Sigmoid colon (tissue), 7 donors: ENCODE measurements at regions of chr1 and their contacts with region 1.

Region 1: DNA sequence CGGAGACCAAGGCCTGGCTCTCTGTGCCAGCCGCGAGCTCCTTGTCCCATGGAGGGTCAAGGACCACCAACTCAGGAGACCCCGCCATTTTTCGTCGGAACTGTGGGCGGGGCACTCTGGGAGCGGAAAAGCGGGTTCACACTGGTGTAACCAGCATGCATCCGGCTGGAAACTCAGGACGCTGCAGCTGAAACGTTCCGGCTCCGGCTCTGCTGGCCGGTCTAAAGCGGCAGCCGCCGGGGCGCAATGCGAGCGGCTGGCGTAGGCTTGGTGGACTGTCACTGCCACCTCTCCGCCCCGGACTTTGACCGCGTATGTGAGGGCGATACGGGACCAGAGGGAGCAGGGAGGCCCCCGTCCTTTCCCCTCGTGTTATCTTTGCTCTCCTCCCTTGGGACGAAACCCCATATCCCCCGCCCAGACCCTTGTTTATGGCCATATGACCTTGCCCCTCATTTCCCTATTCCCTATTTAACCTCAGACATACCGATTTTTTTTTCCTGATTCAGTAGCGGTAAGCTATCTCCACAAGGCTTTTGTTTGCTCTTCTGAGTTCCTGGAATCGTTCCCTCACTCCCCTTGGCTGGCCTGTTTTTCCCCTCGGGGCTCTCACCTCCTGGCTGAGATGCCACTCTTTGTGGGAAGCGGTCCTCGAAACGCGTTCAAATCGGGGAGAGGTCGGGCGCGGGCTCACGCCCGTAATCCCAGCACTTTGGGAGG is at the starts of genes NSL1 and TATDN3:
- DNase-seq: peak; percentile 94
- H3K4me3 ChIP-seq: peak within 1 kb of the TSS; percentile 69 to 92 (median 78)
- H3K27ac ChIP-seq: peak within 1 kb of the TSS; percentile 89 to 98 (median 95)
- H3K4me1 ChIP-seq: peaks cover 0 to 41% (median 29%) of the 10 kb centered on the region in 4 donors
- H3K27me3 ChIP-seq: no peaks in the 10 kb centered on the region
- CTCF ChIP-seq: no peak
- EP300 ChIP-seq: peak in 1 of 4 donors; percentile 47
- POLR2A ChIP-seq: peak; percentile 56 to 73
- total RNA-seq, gene NSL1: 26.0 to 50.4 (median 30.2) TPM
- total RNA-seq, gene TATDN3: 9.1 to 25.7 (median 17.8) TPM

Region 2: GRCh38 chr1:212477014-212477679 is 314.7 kb before region 1 on chr1:
- intact Hi-C with region 1: loop called (anchors 5 kb)
- DNase-seq: peak; percentile 93
- H3K4me3 ChIP-seq: no peak overlapping the region
- H3K27ac ChIP-seq: no peak overlapping the region
- H3K4me1 ChIP-seq: peaks cover 0 to 6% (median 2%) of the 10 kb centered on the region in 4 donors
- H3K27me3 ChIP-seq: no peaks in the 10 kb centered on the region
- CTCF ChIP-seq: peak; percentile 62 to 88 (median 79)
- EP300 ChIP-seq: no peak
- POLR2A ChIP-seq: no peak

Region 3: GRCh38 chr1:212566522-212567479 is 225.0 kb before region 1 on chr1:
- intact Hi-C with region 1: loop called (anchors 10 kb)
- DNase-seq: peak; percentile 66
- H3K4me3 ChIP-seq: peak overlapping the region; percentile 28 to 56 (median 52)
- H3K27ac ChIP-seq: peak overlapping the region; percentile 73 to 81 (median 78)
- H3K4me1 ChIP-seq: peaks cover 0 to 15% (median 11%) of the 10 kb centered on the region in 4 donors
- H3K27me3 ChIP-seq: no peaks in the 10 kb centered on the region
- CTCF ChIP-seq: no peak
- EP300 ChIP-seq: no peak
- POLR2A ChIP-seq: peak in 1 of 2 donors; percentile 13

Region 4: GRCh38 chr1:212857992-212858460 is 66.2 kb after region 1 on chr1 and contains the start of gene FLVCR1:
- intact Hi-C with region 1: loop called (anchors 2 kb)
- DNase-seq: peak; percentile 98
- H3K4me3 ChIP-seq: peak within 1 kb of the TSS; percentile 81 to 98 (median 92)
- H3K27ac ChIP-seq: peak within 1 kb of the TSS; percentile 88 to 93 (median 92)
- H3K4me1 ChIP-seq: peaks cover 0 to 39% (median 30%) of the 10 kb centered on the region in 4 donors
- H3K27me3 ChIP-seq: no peaks in the 10 kb centered on the region
- CTCF ChIP-seq: no peak
- EP300 ChIP-seq: no peak
- POLR2A ChIP-seq: peak; percentile 31 to 64
- total RNA-seq, gene FLVCR1: 2.9 to 6.9 (median 5.1) TPM

Region 5: DNA sequence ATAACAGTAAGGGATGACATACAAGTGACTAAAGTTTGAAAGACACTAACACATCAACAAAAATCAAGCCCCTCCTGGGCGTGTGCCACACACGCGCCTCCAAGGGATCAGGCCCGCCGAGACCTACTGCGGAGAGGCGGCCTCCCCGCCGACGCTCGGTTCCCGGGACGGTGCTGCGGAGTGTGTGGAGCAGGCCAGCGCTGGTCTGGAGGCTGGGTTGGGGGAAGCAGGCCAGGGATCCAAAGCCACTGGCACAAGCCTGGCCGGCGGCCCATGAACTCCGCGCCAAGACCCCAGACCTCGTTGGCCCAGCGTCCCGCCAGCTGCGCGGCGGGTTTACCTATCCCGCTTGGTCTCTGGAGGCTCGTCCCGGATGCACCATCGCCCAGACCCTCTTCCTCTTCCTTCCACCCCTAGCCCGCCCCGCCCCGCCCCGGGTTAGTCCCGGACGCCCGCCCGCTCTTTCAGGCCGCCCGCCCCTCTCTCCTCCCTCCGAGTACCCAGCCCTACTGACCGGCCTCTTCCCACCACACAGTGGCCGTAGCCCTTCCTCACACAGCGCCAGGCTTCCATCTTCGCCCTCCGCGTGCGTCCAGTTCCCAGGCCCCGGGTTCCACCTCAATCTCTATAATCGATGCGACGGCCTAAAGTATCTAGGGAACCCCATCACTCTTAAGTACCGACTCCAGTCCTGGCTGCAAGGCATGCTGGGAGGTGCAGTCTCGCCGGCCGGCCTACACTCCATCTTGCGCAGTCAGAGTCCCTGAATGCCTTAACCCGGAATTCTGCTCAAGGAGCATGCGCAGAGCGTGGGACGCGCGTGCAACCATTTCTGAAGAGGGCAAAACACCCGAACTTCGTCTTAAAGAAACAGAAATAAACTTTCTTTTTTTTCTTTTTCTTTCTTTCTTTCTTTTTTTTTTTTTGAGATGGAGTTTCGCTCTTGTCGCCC is 223.5 kb after region 1 on chr1 and contains the start of gene ANGEL2:
- intact Hi-C with region 1: loop called (anchors 10 kb)
- DNase-seq: peak; percentile 98
- H3K4me3 ChIP-seq: peak within 1 kb of the TSS; percentile 72 to 93 (median 82)
- H3K27ac ChIP-seq: peak within 1 kb of the TSS; percentile 88 to 96 (median 94)
- H3K4me1 ChIP-seq: peaks cover 0 to 22% (median 16%) of the 10 kb centered on the region in 4 donors
- H3K27me3 ChIP-seq: no peaks in the 10 kb centered on the region
- CTCF ChIP-seq: no peak
- EP300 ChIP-seq: no peak
- POLR2A ChIP-seq: peak in 1 of 2 donors; percentile 7
- total RNA-seq, gene ANGEL2: 37.9 to 57.8 (median 44.8) TPM